ENCODE measurements at regions of chr4 and their contacts with region 1.

Region 1: GRCh38 chr4:26860157-26860921 is at the start of gene STIM2:
- DNase-seq: peak; percentile 100
- H3K4me3 Mint-ChIP-seq: peak within 1 kb of the TSS; percentile 91
- H3K27ac Mint-ChIP-seq: peak within 1 kb of the TSS; percentile 97
- H3K4me1 Mint-ChIP-seq: peaks cover 70% of the 10 kb centered on the region
- H3K27me3 Mint-ChIP-seq: no peaks in the 10 kb centered on the region
- total RNA-seq, gene STIM2: 54.1 and 55.6 TPM in 2 replicates

Region 2: DNA sequence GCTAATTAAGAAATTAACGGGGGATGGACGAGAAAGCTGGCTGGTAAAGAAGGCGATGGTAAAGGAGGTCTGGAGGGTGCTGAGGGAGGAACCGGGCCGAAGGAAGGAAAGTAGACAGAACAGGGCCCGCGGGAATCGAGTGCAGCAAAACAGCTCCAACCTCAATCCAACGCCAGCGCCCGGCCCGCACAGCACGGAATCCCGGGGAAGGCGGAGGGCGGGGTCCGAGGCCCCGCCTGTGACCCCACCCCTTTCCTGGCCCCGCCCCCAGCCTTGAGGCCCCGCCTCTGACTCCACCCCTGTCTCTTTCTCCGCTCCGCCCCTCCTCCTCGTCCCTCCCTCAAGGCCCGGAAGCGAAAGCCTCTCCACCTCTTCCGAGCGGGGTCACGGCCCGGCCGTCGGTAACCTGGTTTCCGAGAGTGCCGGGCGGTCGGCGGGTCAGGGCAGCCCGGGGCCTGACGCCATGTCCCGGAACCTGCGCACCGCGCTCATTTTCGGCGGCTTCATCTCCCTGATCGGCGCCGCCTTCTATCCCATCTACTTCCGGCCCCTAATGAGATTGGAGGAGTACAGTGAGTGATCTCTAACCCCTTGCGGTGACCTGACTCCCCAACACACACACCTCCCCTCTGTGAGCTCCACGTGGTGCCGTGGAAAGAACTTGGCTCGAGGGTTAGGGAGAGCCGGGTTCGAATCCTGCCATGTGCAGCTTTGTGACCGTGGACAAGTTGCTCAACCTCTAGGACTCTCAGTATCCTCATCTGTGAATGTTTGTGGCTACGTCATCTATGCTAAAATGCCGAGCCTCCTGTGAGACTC is 946.3 kb before region 1 on chr4 and contains the start of gene SMIM20:
- intact Hi-C with region 1: loop called (anchors 1 kb)
- DNase-seq: peak; percentile 88
- H3K4me3 Mint-ChIP-seq: peak within 1 kb of the TSS; percentile 94
- H3K27ac Mint-ChIP-seq: peak within 1 kb of the TSS; percentile 99
- H3K4me1 Mint-ChIP-seq: peaks cover 24% of the 10 kb centered on the region
- H3K27me3 Mint-ChIP-seq: peaks cover 5% of the 10 kb centered on the region
- total RNA-seq, gene SMIM20: 19.2 and 21.5 TPM in 2 replicates

Region 3: GRCh38 chr4:26319467-26319948 is 540.8 kb before region 1 on chr4:
- intact Hi-C with region 1: loop called (anchors 5 kb)
- DNase-seq: peak; percentile 98
- H3K4me3 Mint-ChIP-seq: peak overlapping the region; percentile 94
- H3K27ac Mint-ChIP-seq: peak overlapping the region; percentile 100
- H3K4me1 Mint-ChIP-seq: peaks cover 33% of the 10 kb centered on the region
- H3K27me3 Mint-ChIP-seq: peaks cover 2% of the 10 kb centered on the region

Region 4: GRCh38 chr4:26746802-26747213 is 113.5 kb before region 1 on chr4:
- intact Hi-C with region 1: loop called (anchors 1 kb)
- DNase-seq: peak; percentile 19
- H3K4me3 Mint-ChIP-seq: no peak overlapping the region
- H3K27ac Mint-ChIP-seq: peak overlapping the region; percentile 35
- H3K4me1 Mint-ChIP-seq: peaks cover 18% of the 10 kb centered on the region
- H3K27me3 Mint-ChIP-seq: peaks cover 27% of the 10 kb centered on the region

Region 5: GRCh38 chr4:26839534-26839951 is 20.8 kb before region 1 on chr4:
- intact Hi-C with region 1: no loop called
- DNase-seq: no peak
- H3K4me3 Mint-ChIP-seq: no peak overlapping the region
- H3K27ac Mint-ChIP-seq: no peak overlapping the region
- H3K4me1 Mint-ChIP-seq: no peaks in the 10 kb centered on the region
- H3K27me3 Mint-ChIP-seq: no peaks in the 10 kb centered on the region

Region 6: DNA sequence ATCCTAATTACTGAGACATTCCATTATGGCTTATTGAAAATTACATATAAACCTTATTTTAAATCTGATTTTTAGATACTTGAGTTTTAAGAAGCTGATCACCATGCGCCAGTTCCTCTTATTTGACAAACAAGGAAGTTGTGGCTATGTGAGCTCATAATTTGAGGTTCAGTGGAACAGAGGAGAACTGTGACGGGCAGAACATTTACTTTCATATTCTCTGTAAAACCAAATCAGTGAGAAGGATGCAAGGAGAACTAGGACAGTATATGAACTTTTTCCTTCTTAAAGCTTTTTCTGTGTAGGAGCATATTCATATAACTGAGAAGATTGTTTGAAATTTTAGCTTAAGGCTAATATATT is 25.6 kb after region 1 on chr4:
- intact Hi-C with region 1: loop called (anchors 1 kb)
- DNase-seq: peak; percentile 43
- H3K4me3 Mint-ChIP-seq: peak overlapping the region; percentile 69
- H3K27ac Mint-ChIP-seq: peak overlapping the region; percentile 91
- H3K4me1 Mint-ChIP-seq: peaks cover 77% of the 10 kb centered on the region
- H3K27me3 Mint-ChIP-seq: no peaks in the 10 kb centered on the region

Region 7: GRCh38 chr4:26964512-26964911 is 104.2 kb after region 1 on chr4:
- intact Hi-C with region 1: no loop called
- DNase-seq: no peak
- H3K4me3 Mint-ChIP-seq: no peak overlapping the region
- H3K27ac Mint-ChIP-seq: no peak overlapping the region
- H3K4me1 Mint-ChIP-seq: peaks cover 36% of the 10 kb centered on the region
- H3K27me3 Mint-ChIP-seq: no peaks in the 10 kb centered on the region

Region 8: DNA sequence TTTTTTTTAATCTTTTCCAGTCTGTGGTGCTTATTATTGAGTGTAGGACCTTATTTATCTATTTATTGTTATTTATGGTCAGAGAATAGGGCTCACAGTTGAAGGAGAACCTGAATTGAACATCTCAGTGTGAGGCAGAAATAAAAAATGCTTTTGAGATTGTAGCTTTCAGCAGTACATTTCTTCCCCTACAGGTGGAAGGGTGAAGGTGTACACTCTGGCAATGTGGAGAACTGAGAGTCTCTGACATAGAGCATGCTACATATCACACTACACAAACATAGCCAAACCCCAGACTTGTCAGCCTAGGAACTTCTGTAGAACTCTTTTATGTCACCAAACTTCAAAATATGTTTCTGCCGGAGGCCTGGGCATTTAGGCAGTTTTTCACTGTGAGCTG is 140.5 kb after region 1 on chr4:
- intact Hi-C with region 1: loop called (anchors 1 kb)
- DNase-seq: no peak
- H3K4me3 Mint-ChIP-seq: no peak overlapping the region
- H3K27ac Mint-ChIP-seq: no peak overlapping the region
- H3K4me1 Mint-ChIP-seq: peaks cover 48% of the 10 kb centered on the region
- H3K27me3 Mint-ChIP-seq: no peaks in the 10 kb centered on the region

Measured in activated T-helper 1 cell treated with anti-CD3 and anti-CD28 coated beads, Interleukin-12 subunit alpha, Interleukin-12 subunit beta, Interleukin-2, Interleukin-4 antibody, amounts not matched to agents 30 ng/mL and 10 ng/mL and 1 ng/mL, durations not matched to agents 14 hours and 24 hours and 36 hours (primary cell).